Prostate gland (tissue), 2 donors: ENCODE measurements at regions of chr17 and their contacts with region 1.

Region 1: GRCh38 chr17:27879987-27880608 is 13.1 kb downstream of the LYRM9 start:
- DNase-seq: peak; percentile 55
- H3K4me3 ChIP-seq: no peak overlapping the region
- H3K27ac ChIP-seq: no peak overlapping the region
- H3K4me1 ChIP-seq: no peaks in the 10 kb centered on the region
- H3K27me3 ChIP-seq: no peaks in the 10 kb centered on the region
- CTCF ChIP-seq: peak; percentile 29 to 83 (median 67)
- POLR2A ChIP-seq: no peak

Region 2: GRCh38 chr17:27666831-27667560 is 213.1 kb before region 1 on chr17:
- intact Hi-C with region 1: loop called (anchors 10 kb)
- DNase-seq: no peak
- H3K4me3 ChIP-seq: no peak overlapping the region
- H3K27ac ChIP-seq: no peak overlapping the region
- H3K4me1 ChIP-seq: no peaks in the 10 kb centered on the region
- H3K27me3 ChIP-seq: no peaks in the 10 kb centered on the region
- CTCF ChIP-seq: no peak
- POLR2A ChIP-seq: no peak

Region 3: GRCh38 chr17:27756512-27757371 is 123.4 kb before region 1 on chr17:
- intact Hi-C with region 1: loop called (anchors 5 kb)
- DNase-seq: peak; percentile 27
- H3K4me3 ChIP-seq: no peak overlapping the region
- H3K27ac ChIP-seq: no peak overlapping the region
- H3K4me1 ChIP-seq: no peaks in the 10 kb centered on the region
- H3K27me3 ChIP-seq: no peaks in the 10 kb centered on the region
- CTCF ChIP-seq: peak; percentile 80 to 89 (median 82)
- POLR2A ChIP-seq: no peak

Region 4: GRCh38 chr17:27805520-27806146 is 74.5 kb before region 1 on chr17:
- intact Hi-C with region 1: loop called (anchors 5 kb)
- DNase-seq: peak; percentile 79
- H3K4me3 ChIP-seq: no peak overlapping the region
- H3K27ac ChIP-seq: no peak overlapping the region
- H3K4me1 ChIP-seq: no peaks in the 10 kb centered on the region
- H3K27me3 ChIP-seq: no peaks in the 10 kb centered on the region
- CTCF ChIP-seq: peak; percentile 63 to 86 (median 81)
- POLR2A ChIP-seq: no peak